Natural killer cell (primary cell): ENCODE measurements at regions of chr16 and their contacts with region 1.

Region 1: GRCh38 chr16:81521151-81521626 is 76.6 kb downstream of the CMIP start:
- DNase-seq: peak; percentile 88 to 94
- ATAC-seq: peak; percentile 45 to 66 (median 63)
- H3K4me3 ChIP-seq: no peak overlapping the region
- H3K4me3 Mint-ChIP-seq: peak overlapping the region; percentile 85
- H3K27ac ChIP-seq: peak overlapping the region; percentile 86
- H3K27ac Mint-ChIP-seq: peak overlapping the region; percentile 96 to 100
- H3K4me1 ChIP-seq: peaks cover 71% of the 10 kb centered on the region
- H3K4me1 Mint-ChIP-seq: peaks cover 61 to 68% of the 10 kb centered on the region in 2 donors
- H3K27me3 ChIP-seq: no peaks in the 10 kb centered on the region
- H3K27me3 Mint-ChIP-seq: no peaks in the 10 kb centered on the region
- CTCF ChIP-seq: no peak

Region 2: DNA sequence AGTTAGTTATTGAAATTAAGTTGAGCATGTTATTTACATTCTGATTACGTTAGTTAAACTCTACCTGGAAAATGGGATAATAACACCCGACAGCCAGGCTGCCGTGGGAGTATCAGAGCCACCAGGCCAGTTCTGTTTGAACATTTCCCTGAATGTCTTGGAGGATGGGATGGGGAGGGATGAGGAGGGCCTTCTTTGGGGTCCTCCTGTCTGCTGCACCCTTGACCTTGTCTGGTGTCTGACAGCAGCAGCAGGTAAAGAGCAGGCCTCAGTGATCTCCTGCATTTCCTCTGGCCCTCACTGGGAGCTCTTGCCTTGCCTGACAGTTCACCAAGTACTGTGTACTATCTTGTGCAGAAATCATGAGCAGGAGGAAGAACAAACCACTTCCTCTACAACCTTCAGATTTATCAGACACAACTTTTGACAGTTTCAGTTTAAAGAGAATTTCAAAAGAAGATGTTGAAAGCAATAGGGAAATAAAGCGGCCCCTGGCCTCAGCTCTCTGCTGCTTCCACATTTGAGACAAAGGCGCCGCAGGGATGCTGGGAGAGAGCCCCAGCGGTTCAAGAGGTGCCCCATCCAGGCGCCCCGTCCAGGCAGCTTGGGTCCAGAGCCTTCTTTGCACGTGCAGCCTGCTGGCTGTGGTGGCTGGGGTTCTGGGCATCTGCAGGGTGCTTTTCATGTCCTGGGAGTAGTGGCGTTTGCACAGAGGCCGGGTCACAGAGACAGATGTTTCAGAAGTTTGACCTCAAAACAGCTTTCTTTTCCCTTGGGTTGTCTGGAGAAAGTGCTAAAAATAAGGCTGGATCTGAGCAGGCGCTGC is 51.3 kb before region 1 on chr16:
- intact Hi-C with region 1: loop called (anchors 2 kb)
- DNase-seq: peak in 1 of 2 donors; percentile 75
- ATAC-seq: peak; percentile 65 to 90 (median 75)
- H3K4me3 ChIP-seq: peak overlapping the region; percentile 13
- H3K4me3 Mint-ChIP-seq: peak overlapping the region; percentile 88
- H3K27ac ChIP-seq: peak overlapping the region; percentile 91
- H3K27ac Mint-ChIP-seq: peak overlapping the region; percentile 95 to 97
- H3K4me1 ChIP-seq: peaks cover 92% of the 10 kb centered on the region
- H3K4me1 Mint-ChIP-seq: peaks cover 69 to 85% of the 10 kb centered on the region in 2 donors
- H3K27me3 ChIP-seq: no peaks in the 10 kb centered on the region
- H3K27me3 Mint-ChIP-seq: no peaks in the 10 kb centered on the region
- CTCF ChIP-seq: no peak

Region 3: DNA sequence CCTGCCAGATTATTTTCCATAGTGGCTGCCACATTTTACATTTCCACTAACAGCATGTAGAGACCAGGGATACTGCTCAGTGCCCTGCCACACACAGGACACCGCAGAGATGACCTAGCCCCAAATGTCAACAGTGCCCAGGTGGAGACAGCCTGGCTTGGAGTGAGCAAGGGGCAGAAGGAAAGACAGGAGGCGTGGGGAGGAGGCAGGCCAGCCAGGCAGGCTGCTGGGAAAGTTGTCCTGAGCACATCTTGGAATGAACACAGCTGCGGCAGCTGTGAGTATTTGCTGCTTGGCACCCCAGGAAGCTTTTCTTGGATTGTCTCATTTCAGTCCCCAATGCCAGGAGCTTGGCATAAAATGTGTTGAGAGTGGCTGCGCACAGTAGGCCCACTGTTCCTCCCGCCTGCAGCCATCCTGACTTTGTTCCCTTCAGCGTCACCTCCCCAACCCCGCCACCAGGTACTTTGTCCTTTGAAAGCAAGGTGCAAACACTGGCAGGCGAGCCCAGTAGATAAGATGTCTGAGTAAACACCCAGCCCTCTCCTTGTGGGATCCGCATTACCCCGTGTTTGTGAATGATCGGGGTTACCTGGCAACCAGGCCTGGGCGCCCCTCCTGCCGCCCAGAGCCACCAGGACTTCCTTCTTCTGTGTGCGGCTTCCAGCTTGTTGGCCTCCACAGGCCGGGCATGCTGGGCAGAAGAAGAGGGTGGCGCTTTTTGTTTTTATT is 37.4 kb after region 1 on chr16:
- intact Hi-C with region 1: loop called (anchors 5 kb)
- DNase-seq: no peak
- ATAC-seq: peak; percentile 51 to 55 (median 52)
- H3K4me3 ChIP-seq: no peak overlapping the region
- H3K4me3 Mint-ChIP-seq: no peak overlapping the region
- H3K27ac ChIP-seq: no peak overlapping the region
- H3K27ac Mint-ChIP-seq: peak overlapping the region; percentile 51 to 70
- H3K4me1 ChIP-seq: peaks cover 35% of the 10 kb centered on the region
- H3K4me1 Mint-ChIP-seq: peaks cover 64 to 67% of the 10 kb centered on the region in 2 donors
- H3K27me3 ChIP-seq: no peaks in the 10 kb centered on the region
- H3K27me3 Mint-ChIP-seq: no peaks in the 10 kb centered on the region
- CTCF ChIP-seq: no peak

Region 4: GRCh38 chr16:81576696-81577095 is 55.5 kb after region 1 on chr16:
- intact Hi-C with region 1: loop called (anchors 1 kb)
- DNase-seq: peak in 1 of 2 donors; percentile 63
- ATAC-seq: peak; percentile 78 to 84 (median 83)
- H3K4me3 ChIP-seq: no peak overlapping the region
- H3K4me3 Mint-ChIP-seq: no peak overlapping the region
- H3K27ac ChIP-seq: peak overlapping the region; percentile 87
- H3K27ac Mint-ChIP-seq: no peak overlapping the region
- H3K4me1 ChIP-seq: peaks cover 8% of the 10 kb centered on the region
- H3K4me1 Mint-ChIP-seq: peaks cover 13 to 14% of the 10 kb centered on the region in 2 donors
- H3K27me3 ChIP-seq: no peaks in the 10 kb centered on the region
- H3K27me3 Mint-ChIP-seq: no peaks in the 10 kb centered on the region
- CTCF ChIP-seq: no peak

Region 5: DNA sequence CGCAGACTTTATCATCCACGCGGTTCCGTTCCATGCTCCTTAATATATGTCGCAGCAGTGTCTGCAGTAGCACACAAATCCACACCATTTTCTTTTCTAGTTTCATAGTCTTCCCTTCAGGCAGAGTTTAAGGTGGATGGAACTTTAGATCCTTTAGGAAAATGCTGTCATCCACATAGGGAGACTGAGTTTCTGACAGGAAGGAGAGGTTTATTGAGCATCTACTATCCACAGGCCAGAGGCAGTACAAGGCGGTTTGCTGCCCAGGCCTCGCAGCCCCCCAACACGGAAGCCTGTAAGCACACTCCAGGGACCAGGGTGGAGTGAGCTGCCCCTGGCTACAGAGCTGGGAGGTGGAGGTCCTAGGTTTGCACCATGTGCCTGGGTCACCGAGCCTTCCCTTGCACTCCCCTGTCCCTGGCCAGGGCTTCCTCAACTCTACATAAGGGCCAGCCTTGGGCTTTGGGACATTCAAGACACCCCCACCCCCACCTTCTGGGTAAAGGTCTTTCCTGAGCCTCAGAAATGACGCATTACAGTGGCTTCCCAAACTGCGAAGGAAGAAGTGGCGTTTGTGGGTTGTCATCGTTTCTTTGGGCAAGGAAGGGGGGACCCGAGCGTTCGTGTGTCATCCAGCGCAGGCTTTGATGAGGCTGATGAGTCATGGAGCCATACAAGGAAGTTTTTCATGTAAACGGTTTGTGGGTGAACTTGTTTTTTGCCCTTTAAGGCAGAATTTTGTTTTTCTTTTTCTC is 111.4 kb after region 1 on chr16:
- intact Hi-C with region 1: loop called (anchors 1 kb)
- DNase-seq: peak; percentile 68 to 91
- ATAC-seq: peak; percentile 84 to 87 (median 84)
- H3K4me3 ChIP-seq: no peak overlapping the region
- H3K4me3 Mint-ChIP-seq: peak overlapping the region; percentile 49
- H3K27ac ChIP-seq: peak overlapping the region; percentile 73
- H3K27ac Mint-ChIP-seq: peak overlapping the region; percentile 87 to 88
- H3K4me1 ChIP-seq: peaks cover 35% of the 10 kb centered on the region
- H3K4me1 Mint-ChIP-seq: peaks cover 40 to 53% of the 10 kb centered on the region in 2 donors
- H3K27me3 ChIP-seq: no peaks in the 10 kb centered on the region
- H3K27me3 Mint-ChIP-seq: no peaks in the 10 kb centered on the region
- CTCF ChIP-seq: no peak

Region 6: DNA sequence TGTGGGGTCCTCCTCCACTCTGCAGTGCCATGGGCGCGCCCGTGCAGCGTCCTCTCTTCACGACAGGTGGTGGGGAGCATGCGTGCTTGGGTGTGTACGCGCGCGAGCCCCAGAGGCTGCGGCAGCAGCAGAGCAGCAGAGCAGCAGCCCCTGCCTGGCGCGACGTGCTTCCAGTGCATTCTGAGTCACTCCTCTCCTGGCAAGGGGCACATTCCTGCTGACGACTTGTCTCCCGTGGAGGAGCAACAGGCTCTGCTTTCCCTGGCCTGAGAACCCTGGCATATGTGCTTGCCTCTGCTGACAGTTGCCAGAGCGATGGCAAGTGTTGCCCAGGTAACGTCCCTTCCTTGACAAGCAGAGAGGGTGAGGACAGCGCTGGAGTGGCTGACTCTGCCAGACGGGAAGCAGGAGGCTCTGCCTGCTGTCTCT is 124.1 kb after region 1 on chr16:
- intact Hi-C with region 1: no loop called
- DNase-seq: no peak
- ATAC-seq: no peak
- H3K4me3 ChIP-seq: no peak overlapping the region
- H3K4me3 Mint-ChIP-seq: no peak overlapping the region
- H3K27ac ChIP-seq: no peak overlapping the region
- H3K27ac Mint-ChIP-seq: no peak overlapping the region
- H3K4me1 ChIP-seq: peaks cover 21% of the 10 kb centered on the region
- H3K4me1 Mint-ChIP-seq: peaks cover 54 to 77% of the 10 kb centered on the region in 2 donors
- H3K27me3 ChIP-seq: no peaks in the 10 kb centered on the region
- H3K27me3 Mint-ChIP-seq: no peaks in the 10 kb centered on the region
- CTCF ChIP-seq: no peak

Region 7: GRCh38 chr16:81737885-81738786 is 216.9 kb after region 1 on chr16:
- intact Hi-C with region 1: no loop called
- DNase-seq: peak; percentile 80 to 93
- ATAC-seq: peak; percentile 89 to 97 (median 96)
- H3K4me3 ChIP-seq: peak overlapping the region; percentile 11
- H3K4me3 Mint-ChIP-seq: peak overlapping the region; percentile 58
- H3K27ac ChIP-seq: no peak overlapping the region
- H3K27ac Mint-ChIP-seq: peak overlapping the region in 1 of 2 donors; percentile 75
- H3K4me1 ChIP-seq: peaks cover 35% of the 10 kb centered on the region
- H3K4me1 Mint-ChIP-seq: peaks cover 7 to 19% of the 10 kb centered on the region in 2 donors
- H3K27me3 ChIP-seq: no peaks in the 10 kb centered on the region
- H3K27me3 Mint-ChIP-seq: no peaks in the 10 kb centered on the region
- CTCF ChIP-seq: peak; percentile 88